Prostate gland (tissue), 2 donors: ENCODE measurements at regions of chr1 and their contacts with region 1.

Region 1: DNA sequence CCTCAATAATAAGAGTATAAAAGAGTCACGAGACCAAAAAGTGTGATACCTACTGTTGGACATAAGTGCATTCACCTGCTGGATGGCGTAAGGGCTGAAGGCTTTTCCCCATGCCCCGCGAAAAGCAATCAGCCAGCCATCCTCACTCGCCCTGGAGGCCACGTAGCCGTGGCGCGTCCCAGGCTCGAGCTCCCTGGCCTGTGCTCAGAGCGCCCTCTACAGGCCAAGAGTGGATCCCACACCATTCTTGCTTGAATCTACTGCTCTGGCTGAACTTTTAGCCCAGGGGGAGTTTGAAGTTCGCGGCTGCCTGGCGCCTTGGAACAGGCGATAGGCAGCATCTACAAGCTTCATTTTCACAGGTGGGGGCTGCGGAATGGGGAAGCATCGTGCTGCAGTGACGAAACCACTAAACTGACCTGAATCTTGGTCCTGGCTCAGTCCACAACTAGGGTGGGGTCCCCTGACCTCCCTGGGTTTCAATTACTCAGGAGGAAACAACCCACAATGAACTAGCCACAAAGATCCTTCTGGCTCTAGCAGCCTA is 70.3 kb upstream of the SERBP1 start:
- DNase-seq: peak; percentile 74
- H3K4me3 ChIP-seq: no peak overlapping the region
- H3K27ac ChIP-seq: no peak overlapping the region
- H3K4me1 ChIP-seq: no peaks in the 10 kb centered on the region
- H3K27me3 ChIP-seq: no peaks in the 10 kb centered on the region
- CTCF ChIP-seq: peak; percentile 85 to 96 (median 86)
- POLR2A ChIP-seq: no peak

Region 2: GRCh38 chr1:67347688-67348472 is 152.6 kb before region 1 on chr1:
- intact Hi-C with region 1: loop called (anchors 2 kb)
- DNase-seq: peak; percentile 34
- H3K4me3 ChIP-seq: no peak overlapping the region
- H3K27ac ChIP-seq: no peak overlapping the region
- H3K4me1 ChIP-seq: no peaks in the 10 kb centered on the region
- H3K27me3 ChIP-seq: no peaks in the 10 kb centered on the region
- CTCF ChIP-seq: peak; percentile 13 to 77 (median 72)
- POLR2A ChIP-seq: no peak

Region 3: DNA sequence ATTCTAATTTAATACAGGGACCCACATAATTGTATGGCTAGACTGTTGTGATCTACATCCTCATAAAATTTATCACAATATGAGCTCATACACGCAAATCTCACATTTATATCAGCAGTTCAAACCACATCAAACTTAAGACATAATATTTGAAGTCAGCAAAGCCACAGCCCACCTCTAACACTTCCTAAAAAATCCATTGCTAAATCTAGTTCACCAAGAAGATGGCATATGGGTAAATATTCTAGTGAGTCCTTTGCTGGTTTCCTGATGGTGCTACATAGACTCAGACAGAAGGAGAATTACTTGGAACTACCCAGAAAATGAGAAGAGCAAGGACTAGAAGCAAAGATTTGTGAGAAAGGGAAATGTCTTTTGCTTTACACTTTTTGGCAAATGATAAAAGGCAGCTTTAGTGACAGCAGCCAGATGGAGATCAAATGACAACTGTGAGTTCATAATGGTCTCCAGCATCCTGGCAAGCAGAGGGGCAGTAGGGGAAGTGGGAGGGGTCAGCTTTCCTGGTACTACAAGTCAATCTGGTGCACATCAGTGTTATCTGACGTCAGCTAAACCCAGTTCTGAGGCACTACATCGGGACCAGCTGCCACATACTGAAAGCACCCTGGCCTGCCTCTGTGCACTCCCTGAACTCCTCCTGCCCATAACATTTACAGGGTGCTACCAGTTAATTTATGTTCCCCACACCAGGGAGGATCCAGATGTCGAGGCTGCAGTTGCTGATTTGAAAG is 173.9 kb after region 1 on chr1:
- intact Hi-C with region 1: no loop called
- DNase-seq: peak; percentile 38
- H3K4me3 ChIP-seq: no peak overlapping the region
- H3K27ac ChIP-seq: no peak overlapping the region
- H3K4me1 ChIP-seq: no peaks in the 10 kb centered on the region
- H3K27me3 ChIP-seq: no peaks in the 10 kb centered on the region
- CTCF ChIP-seq: no peak
- POLR2A ChIP-seq: no peak